ENCODE measurements at regions of chr6 and their contacts with region 1.

Region 1: DNA sequence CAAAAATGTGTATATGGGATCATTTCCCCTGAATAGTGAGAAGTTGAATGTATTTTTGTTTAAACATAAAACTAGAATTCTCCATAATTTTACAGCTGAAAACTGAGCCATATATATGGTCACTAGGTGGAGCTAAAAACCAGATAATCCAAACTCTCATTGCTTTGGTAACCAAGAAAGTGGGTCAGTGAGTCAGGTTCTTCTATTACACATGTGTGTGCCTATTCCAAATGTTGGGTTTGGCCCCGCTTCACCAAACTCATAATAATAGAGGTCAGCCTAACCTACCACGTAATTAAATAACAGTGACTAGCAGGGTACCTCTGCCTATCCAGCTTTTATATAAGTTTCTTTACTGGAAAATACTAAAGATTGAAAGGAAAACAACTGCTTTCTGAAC is 19.3 kb upstream of the RNGTT start:
- DNase-seq: peak; percentile 57
- CTCF ChIP-seq: peak; percentile 53

Region 2: GRCh38 chr6:89035252-89036106 is 52.8 kb after region 1 on chr6:
- in situ Hi-C with region 1: no loop called
- DNase-seq: no peak
- CTCF ChIP-seq: no peak

Region 3: DNA sequence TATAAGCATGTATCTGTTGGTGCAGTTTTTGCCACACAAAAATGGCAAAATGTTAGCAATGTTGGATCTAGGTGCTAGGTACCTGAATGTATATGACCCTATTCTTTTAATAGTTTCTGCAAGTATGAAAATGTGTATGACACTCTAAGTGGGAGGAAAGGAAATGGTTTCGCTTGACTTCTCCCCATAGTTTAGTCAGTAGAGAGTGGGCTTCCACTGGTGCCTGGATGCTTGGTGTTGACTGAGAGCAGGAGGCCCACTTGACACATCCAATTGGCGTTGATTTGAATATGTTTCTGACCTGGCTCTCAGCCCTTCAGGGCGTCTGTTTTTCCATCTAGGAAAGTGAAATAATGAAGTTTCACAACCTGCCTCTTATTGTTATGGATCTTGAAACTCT is 276.2 kb after region 1 on chr6:
- in situ Hi-C with region 1: loop called (anchors 10 kb)
- DNase-seq: peak; percentile 49
- CTCF ChIP-seq: no peak

Region 4: GRCh38 chr6:89610149-89610642 is 627.5 kb after region 1 on chr6:
- in situ Hi-C with region 1: loop called (anchors 25 kb)
- DNase-seq: peak; percentile 77
- CTCF ChIP-seq: peak; percentile 87

Measured in GM13976 (cell line).